Caco-2 (cell line): ENCODE measurements at regions of chr19 and their contacts with region 1.

Region 1: GRCh38 chr19:12722566-12723380 is 959 bp downstream of the TNPO2 start:
- DNase-seq: peak; percentile 94 to 98
- H3K4me3 ChIP-seq: peak overlapping the region; percentile 92
- H3K4me3 Mint-ChIP-seq: peak overlapping the region; percentile 91
- H3K27ac Mint-ChIP-seq: peak overlapping the region; percentile 77
- H3K4me1 ChIP-seq: 0 out of 2 replicates have a peak, but pooled peaks cover 8% of the 10 kb centered on the region
- H3K4me1 Mint-ChIP-seq: peaks cover 14% of the 10 kb centered on the region
- H3K27me3 ChIP-seq: no peaks in the 10 kb centered on the region
- H3K27me3 Mint-ChIP-seq: no peaks in the 10 kb centered on the region
- CTCF ChIP-seq: no peak

Region 2: DNA sequence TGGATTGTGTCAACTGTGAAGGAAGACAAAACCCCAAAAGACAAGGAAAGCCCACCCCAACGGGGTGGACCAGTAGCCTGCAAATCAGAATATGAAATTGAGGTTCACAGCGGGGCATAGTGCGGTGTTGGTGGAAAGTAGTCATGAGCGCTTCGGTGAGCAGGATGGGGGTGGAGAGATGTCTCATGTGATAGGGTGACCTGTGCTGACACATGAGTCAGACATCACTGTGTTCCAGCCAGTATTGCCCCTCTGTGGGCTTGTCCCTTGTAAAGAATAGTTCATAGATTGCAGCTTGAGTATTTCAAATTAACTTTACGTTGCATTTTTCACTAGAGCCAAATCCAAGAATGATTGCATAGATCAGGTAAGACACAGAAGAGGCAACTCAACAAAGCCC is 827.9 kb before region 1 on chr19:
- CTCF ChIA-PET with region 1: no interaction called
- POLR2A ChIA-PET with region 1: no interaction called
- intact Hi-C with region 1: no loop called
- DNase-seq: no peak
- H3K4me3 ChIP-seq: no peak overlapping the region
- H3K4me3 Mint-ChIP-seq: no peak overlapping the region
- H3K27ac Mint-ChIP-seq: no peak overlapping the region
- H3K4me1 ChIP-seq: no peaks in the 10 kb centered on the region
- H3K4me1 Mint-ChIP-seq: no peaks in the 10 kb centered on the region
- H3K27me3 ChIP-seq: no peaks in the 10 kb centered on the region
- H3K27me3 Mint-ChIP-seq: no peaks in the 10 kb centered on the region
- CTCF ChIP-seq: no peak

Region 3: DNA sequence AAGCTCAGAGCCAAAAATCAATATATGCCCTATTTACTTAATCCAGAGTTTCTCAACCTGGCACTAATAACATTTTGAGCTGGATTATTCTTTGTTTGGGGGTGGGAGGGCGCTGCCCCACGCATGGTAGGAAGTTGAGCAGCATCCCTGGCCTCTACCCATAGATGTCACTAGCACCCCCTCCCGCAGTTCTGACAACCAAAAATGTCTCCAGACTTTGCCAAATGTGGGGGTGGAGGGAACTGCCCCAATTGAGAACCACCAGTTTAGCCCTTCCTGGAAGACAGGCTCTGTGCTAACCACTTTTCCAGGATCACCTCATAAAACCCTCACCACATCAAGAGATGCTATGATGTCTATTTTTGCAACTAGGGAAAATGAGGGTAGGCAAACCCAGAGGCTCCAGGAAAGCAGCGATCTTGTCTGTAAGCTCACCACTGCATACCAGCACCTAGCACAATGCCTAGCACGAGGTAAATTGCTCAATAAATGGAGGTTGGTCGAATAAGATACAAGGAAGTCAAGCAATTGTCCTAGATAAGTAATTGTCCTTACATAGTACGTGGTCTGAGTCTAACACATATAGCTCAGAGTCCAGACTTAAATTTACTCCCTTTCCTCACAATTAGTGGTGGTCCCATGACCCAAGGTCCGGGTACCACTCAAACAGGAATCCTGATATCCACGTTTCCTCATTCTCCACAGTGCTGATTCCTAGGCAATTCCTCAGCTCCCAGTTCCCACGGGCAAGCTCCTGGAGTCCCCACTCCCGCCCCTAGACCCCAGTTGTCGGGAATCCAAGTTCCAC is 10.8 kb after region 1 on chr19:
- CTCF ChIA-PET with region 1: interaction called, 11 read pairs
- POLR2A ChIA-PET with region 1: interaction called, 8 read pairs
- intact Hi-C with region 1: loop called (anchors 1 kb)
- DNase-seq: peak in 1 of 2 experiments; percentile 52
- H3K4me3 ChIP-seq: peak overlapping the region; percentile 73
- H3K4me3 Mint-ChIP-seq: peak overlapping the region; percentile 92
- H3K27ac Mint-ChIP-seq: peak overlapping the region; percentile 88
- H3K4me1 ChIP-seq: peaks cover 17% of the 10 kb centered on the region
- H3K4me1 Mint-ChIP-seq: peaks cover 15% of the 10 kb centered on the region
- H3K27me3 ChIP-seq: no peaks in the 10 kb centered on the region
- H3K27me3 Mint-ChIP-seq: no peaks in the 10 kb centered on the region
- CTCF ChIP-seq: peak in 1 of 2 experiments; percentile 56

Region 4: GRCh38 chr19:12796146-12797071 is 73.6 kb after region 1 on chr19:
- CTCF ChIA-PET with region 1: interaction called, 5 read pairs
- POLR2A ChIA-PET with region 1: interaction called, 11 read pairs
- intact Hi-C with region 1: loop called (anchors 2 kb)
- DNase-seq: peak; percentile 81 to 83
- H3K4me3 ChIP-seq: no peak overlapping the region
- H3K4me3 Mint-ChIP-seq: peak overlapping the region; percentile 45
- H3K27ac Mint-ChIP-seq: peak overlapping the region; percentile 21
- H3K4me1 ChIP-seq: peaks cover 9% of the 10 kb centered on the region
- H3K4me1 Mint-ChIP-seq: peaks cover 5% of the 10 kb centered on the region
- H3K27me3 ChIP-seq: no peaks in the 10 kb centered on the region
- H3K27me3 Mint-ChIP-seq: no peaks in the 10 kb centered on the region
- CTCF ChIP-seq: peak; percentile 91